ENCODE measurements at regions of chr16 and their contacts with region 1.

Region 1: DNA sequence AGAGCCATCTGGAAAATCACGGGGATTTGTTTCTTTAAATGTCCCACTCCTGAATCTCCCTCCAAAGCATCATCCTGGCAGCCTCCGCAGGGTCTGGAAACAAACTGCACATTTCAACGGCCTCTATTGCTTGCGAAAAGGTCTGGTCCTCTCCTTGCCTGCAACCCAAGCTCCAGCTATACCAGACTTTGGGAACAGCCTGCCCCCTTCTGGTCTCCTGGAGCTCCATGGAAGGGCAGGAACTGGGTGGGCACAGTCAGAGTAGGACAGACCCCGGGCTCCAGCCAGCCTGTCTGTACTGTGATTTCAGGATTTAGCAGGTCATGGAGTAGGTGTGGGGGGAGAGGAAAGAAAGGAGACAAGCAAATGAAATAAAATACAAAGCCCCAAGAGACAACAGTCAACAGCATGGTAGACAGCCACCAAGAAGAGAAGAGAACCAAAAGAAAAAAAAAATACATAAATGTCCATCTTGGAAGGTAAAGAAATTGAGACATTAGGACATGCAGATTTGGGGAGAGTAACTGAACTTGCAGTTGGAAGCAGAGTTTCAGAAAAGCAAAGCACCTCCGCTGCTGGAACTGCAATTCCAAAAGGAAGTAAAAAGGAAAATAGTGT is 2.7 kb downstream of the XYLT1 start:
- DNase-seq: peak; percentile 32
- H3K4me3 ChIP-seq: peak overlapping the region; percentile 74
- H3K27ac ChIP-seq: no peak overlapping the region
- H3K27me3 ChIP-seq: no peaks in the 10 kb centered on the region
- CTCF ChIP-seq: peak; percentile 90

Region 2: GRCh38 chr16:16861546-16861945 is 606.5 kb before region 1 on chr16:
- CTCF ChIA-PET with region 1: interaction called, 38 read pairs
- POLR2A ChIA-PET with region 1: no interaction called
- DNase-seq: peak; percentile 0
- H3K4me3 ChIP-seq: no peak overlapping the region
- H3K27ac ChIP-seq: no peak overlapping the region
- H3K27me3 ChIP-seq: no peaks in the 10 kb centered on the region
- CTCF ChIP-seq: peak; percentile 72

Region 3: GRCh38 chr16:17277977-17278381 is 190.1 kb before region 1 on chr16:
- CTCF ChIA-PET with region 1: interaction called, 16 read pairs
- POLR2A ChIA-PET with region 1: no interaction called
- DNase-seq: no peak
- H3K4me3 ChIP-seq: no peak overlapping the region
- H3K27ac ChIP-seq: no peak overlapping the region
- H3K27me3 ChIP-seq: no peaks in the 10 kb centered on the region
- CTCF ChIP-seq: peak; percentile 51

Region 4: DNA sequence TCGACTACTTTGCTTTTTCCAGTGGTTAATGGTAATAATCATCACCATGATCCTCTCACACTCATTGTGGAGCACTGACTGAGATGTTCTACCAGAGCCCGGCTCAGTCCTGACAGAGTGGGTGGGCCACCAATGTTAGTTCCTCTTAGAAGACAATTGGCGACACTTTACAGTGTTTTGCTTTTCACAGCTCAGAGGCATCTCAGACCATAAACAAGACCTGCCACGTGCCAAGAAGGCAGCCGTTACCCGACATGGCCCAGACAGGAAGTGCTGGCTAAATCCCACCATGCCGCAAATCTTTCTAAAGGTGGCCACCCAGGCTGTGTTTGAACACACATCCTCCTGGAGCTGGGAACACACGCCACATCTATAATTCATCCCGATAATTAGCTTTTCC is 101.0 kb before region 1 on chr16:
- CTCF ChIA-PET with region 1: interaction called, 17 read pairs
- POLR2A ChIA-PET with region 1: interaction called, 4 read pairs
- DNase-seq: no peak
- H3K4me3 ChIP-seq: no peak overlapping the region
- H3K27ac ChIP-seq: no peak overlapping the region
- H3K27me3 ChIP-seq: no peaks in the 10 kb centered on the region
- CTCF ChIP-seq: no peak

Region 5: GRCh38 chr16:17457513-17457912 is 10.5 kb before region 1 on chr16:
- CTCF ChIA-PET with region 1: interaction called, 10 read pairs
- POLR2A ChIA-PET with region 1: no interaction called
- DNase-seq: no peak
- H3K4me3 ChIP-seq: no peak overlapping the region
- H3K27ac ChIP-seq: no peak overlapping the region
- H3K27me3 ChIP-seq: no peaks in the 10 kb centered on the region
- CTCF ChIP-seq: no peak

Region 6: DNA sequence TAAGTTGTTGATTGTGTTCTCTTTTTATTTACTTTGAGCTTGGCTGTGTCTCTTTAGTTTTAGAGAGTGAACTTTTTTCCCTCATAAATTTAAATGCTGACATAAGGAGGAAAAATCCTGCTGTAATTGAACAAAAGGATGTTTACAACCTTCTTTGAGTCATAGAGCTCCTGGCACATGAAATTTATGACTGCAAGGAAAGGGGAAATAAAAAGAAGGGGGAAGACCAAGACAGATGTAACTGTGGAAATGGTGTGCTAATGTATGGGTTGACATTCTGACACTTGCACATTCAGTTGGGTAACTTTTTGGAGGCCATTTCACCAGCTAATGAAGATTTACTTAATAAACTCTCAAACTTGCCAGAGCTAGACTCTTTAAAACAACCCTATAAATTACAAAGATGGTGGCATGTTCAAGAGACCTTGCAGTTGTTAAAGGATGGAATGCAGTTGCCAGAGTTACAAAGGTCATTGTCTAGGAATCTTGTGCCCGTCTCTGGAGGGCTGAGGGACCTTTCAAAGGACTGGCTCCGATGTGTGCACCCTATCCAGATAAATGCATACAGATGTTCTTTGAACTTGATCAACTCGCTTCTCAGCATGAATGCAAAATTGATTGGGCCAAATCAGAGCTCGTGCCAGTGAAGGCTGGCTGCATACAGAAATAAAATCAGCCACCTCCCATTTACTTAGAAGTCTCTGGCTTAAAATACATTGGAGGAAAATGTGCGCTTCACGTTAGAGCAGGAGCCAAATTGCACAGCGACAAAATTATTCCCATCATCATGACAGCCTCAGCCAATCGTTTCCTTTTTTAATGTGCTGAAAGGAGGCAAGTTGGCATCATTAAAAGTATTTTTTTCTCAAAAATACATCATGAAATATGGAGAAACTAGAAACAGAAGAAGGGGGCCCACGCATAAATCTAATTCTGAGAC is 291.7 kb after region 1 on chr16:
- CTCF ChIA-PET with region 1: no interaction called
- POLR2A ChIA-PET with region 1: no interaction called
- DNase-seq: no peak
- H3K4me3 ChIP-seq: no peak overlapping the region
- H3K27ac ChIP-seq: no peak overlapping the region
- H3K27me3 ChIP-seq: no peaks in the 10 kb centered on the region
- CTCF ChIP-seq: no peak

Measured in AG04450 (cell line).